Activated CD4-positive, alpha-beta T cell treated with anti-CD3 and anti-CD28 coated beads, Interleukin-2, amount 10 ng/mL, durations not matched to agents 24 days and 14 days (primary cell): ENCODE measurements at regions of chr3 and their contacts with region 1.

Region 1: GRCh38 chr3:49411968-49412631 is at the starts of genes RHOA and TCTA:
- DNase-seq: peak; percentile 100
- H3K4me3 Mint-ChIP-seq: peak within 1 kb of the TSS; percentile 94
- H3K27ac Mint-ChIP-seq: peak within 1 kb of the TSS; percentile 95
- H3K4me1 Mint-ChIP-seq: peaks cover 59% of the 10 kb centered on the region
- H3K27me3 Mint-ChIP-seq: peaks cover 2% of the 10 kb centered on the region
- total RNA-seq, gene RHOA: 381 and 391 TPM in 2 replicates
- total RNA-seq, gene TCTA: 18.7 and 21.2 TPM in 2 replicates

Region 2: DNA sequence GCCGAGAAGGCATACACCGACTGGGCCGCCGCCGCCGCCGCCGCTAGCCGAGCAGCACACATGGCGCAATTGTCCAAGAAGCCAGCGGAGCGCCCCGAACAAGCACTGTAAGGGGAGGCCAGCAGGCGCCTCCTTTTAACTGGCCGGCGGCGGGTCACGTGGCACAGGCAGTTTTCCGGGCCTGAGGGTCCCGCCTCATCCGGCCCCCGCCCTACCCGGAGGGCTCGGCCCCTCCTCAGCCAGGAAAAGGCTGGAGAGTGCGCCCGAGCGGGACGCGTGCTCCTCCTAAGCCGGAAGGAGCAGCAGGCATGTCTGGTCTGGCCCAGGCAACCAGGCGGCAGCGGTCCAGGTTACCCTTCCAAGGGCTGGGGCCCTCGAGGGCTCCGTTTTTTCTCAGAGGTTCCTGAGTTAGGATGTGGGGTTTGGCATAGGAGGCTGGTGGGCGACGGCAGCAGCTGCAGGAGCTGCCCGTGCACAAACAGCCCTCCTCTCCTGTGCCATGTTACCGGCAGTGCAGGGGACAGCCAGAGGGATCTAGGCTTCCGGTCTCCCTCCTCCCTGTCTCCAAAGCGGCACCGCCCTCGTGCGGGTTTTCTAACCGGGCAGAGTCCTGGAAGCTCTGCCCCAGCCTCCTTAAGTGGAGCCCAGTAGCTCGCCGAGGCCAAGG is 53.8 kb before region 1 on chr3 and contains the start of gene GPX1:
- intact Hi-C with region 1: loop called (anchors 1 kb)
- DNase-seq: peak; percentile 96
- H3K4me3 Mint-ChIP-seq: peak within 1 kb of the TSS; percentile 95
- H3K27ac Mint-ChIP-seq: peak within 1 kb of the TSS; percentile 97
- H3K4me1 Mint-ChIP-seq: peaks cover 21% of the 10 kb centered on the region
- H3K27me3 Mint-ChIP-seq: no peaks in the 10 kb centered on the region
- total RNA-seq, gene GPX1: 190 and 200 TPM in 2 replicates

Region 3: GRCh38 chr3:49428697-49429100 is 16.6 kb after region 1 on chr3:
- intact Hi-C with region 1: loop called (anchors 1 kb)
- DNase-seq: no peak
- H3K4me3 Mint-ChIP-seq: peak overlapping the region; percentile 93
- H3K27ac Mint-ChIP-seq: peak overlapping the region; percentile 94
- H3K4me1 Mint-ChIP-seq: peaks cover 8% of the 10 kb centered on the region
- H3K27me3 Mint-ChIP-seq: no peaks in the 10 kb centered on the region

Region 4: DNA sequence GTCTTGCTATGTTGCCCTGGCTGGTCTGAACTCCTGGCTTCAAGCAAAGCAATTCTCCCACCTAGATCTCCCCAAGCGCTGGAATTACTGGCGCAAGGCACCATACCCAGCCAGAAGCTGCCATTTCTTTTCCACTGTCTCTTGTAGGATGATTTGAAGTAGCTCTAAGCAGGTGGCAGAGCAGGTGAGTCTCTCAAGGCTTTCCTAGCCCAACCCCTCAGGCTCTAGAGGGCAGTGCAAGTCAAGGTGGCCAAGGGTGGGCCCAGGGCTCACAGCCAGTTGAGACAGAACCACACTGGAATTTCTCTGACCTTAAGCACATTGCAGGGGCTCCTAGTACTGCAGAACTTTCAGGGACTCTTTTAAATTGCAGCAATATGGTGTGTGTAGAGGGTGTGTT is 42.4 kb after region 1 on chr3:
- intact Hi-C with region 1: loop called (anchors 1 kb)
- DNase-seq: no peak
- H3K4me3 Mint-ChIP-seq: no peak overlapping the region
- H3K27ac Mint-ChIP-seq: no peak overlapping the region
- H3K4me1 Mint-ChIP-seq: no peaks in the 10 kb centered on the region
- H3K27me3 Mint-ChIP-seq: no peaks in the 10 kb centered on the region

Region 5: DNA sequence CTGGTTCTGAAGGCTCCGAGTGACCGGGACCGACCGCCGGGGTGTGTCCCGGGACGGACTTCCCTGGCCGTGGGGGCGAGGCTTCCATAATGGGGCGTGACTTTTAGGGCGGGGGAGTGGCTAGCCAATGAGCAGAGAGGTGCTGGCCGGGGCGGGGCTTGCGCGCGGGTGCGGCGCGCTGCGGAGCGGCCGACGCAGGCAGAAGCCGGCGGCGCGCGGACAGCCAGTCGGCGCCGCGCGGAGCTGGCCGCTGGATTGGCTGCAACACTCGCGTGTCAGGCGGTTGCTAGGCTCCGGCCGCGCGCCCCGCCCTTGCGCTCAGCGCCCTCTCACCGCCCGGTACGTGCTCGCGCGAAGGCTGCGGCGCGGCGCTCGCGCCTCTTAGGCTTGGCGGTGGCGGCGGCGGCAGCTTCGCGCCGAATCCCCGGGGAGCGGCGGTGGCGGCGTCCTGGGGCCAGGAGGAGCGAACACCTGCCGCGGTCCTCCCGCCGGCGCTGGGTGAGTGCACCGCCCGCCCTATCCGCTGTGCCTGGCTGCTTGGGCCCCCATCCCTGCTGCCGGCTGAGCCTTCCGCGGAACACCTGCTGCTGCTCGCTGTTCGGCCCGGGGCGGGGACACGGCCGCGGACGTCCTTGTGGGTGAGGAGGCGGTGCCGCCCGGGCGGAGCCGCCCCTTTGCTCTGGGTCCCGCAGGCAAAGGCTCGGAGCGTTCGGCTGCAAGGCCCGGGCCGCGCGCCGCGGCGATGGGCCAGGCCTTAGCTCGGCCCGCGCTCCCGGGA is 58.0 kb after region 1 on chr3 and contains the start of gene DAG1:
- intact Hi-C with region 1: loop called (anchors 1 kb)
- DNase-seq: peak; percentile 99
- H3K4me3 Mint-ChIP-seq: peak within 1 kb of the TSS; percentile 93
- H3K27ac Mint-ChIP-seq: peak within 1 kb of the TSS; percentile 91
- H3K4me1 Mint-ChIP-seq: peaks cover 21% of the 10 kb centered on the region
- H3K27me3 Mint-ChIP-seq: no peaks in the 10 kb centered on the region
- total RNA-seq, gene DAG1: 21.3 and 21.9 TPM in 2 replicates